ENCODE measurements at regions of chr15 and their contacts with region 1.

Region 1: DNA sequence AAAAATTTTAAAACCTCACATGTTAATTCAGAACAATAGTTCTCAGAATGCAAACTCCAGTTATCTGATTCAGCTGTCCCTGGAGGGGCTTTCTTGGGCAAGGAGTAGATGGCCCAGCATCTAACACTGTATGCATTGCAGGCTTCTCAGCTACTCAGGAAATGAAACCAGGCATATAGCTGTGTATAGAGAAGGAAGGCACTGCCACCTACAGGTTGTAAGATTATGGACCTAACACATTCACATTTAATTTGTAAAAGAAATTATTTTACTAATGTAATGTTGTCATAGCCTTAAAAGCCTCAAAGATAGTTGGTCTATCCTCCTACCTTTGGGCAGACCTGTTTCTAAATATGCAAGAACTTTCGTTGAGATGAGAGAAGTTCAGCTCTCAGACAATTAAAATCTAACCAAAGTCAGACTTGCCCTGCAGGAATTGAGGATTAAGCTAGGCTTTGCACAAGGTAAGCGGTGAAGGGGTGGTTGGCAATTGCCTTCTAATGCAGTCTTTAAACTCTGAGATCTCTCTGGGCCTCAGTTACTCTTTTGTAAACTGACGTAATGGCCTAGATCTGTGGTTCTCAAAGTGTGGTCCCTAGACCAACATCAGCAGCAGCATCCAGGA is 132.8 kb upstream of the SLC24A5 start:
- DNase-seq: peak in 1 of 2 donors; percentile 47
- ATAC-seq: peak; percentile 83 to 96 (median 89)
- H3K4me3 ChIP-seq: no peak overlapping the region
- H3K27ac ChIP-seq: no peak overlapping the region
- H3K4me1 ChIP-seq: no peaks in the 10 kb centered on the region
- H3K27me3 ChIP-seq: no peaks in the 10 kb centered on the region
- CTCF ChIP-seq: peak; percentile 59 to 86 (median 74)

Region 2: DNA sequence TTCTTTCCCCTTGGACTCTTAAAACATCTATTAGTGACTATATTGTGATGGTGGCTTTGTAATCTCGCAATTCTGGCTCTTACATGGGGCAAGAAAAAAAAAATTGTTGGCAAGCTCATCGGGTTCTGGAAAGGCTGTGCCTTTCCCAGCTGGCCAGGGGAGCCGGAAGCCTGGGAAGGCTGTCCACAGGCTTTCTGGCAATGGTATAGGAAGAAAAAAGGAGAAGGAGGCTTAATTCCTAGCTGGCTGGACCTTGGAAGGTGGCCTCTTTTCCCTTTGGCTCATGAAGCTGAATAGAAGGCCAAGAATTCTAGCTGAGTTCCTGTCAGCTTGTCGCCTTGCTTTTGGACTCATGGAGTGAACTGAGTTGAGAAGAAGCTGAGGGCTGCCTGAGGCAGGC is 514.2 kb before region 1 on chr15:
- intact Hi-C with region 1: loop called in 5 of 10 experiments (anchors 2 to 10 kb)
- DNase-seq: peak; percentile 57 to 80
- ATAC-seq: peak; percentile 93 to 98 (median 96)
- H3K4me3 ChIP-seq: peak overlapping the region in 1 of 10 donors; percentile 8
- H3K27ac ChIP-seq: peak overlapping the region in 8 of 10 donors; percentile 2 to 69 (median 46)
- H3K4me1 ChIP-seq: peaks cover 0 to 35% (median 21%) of the 10 kb centered on the region in 9 donors
- H3K27me3 ChIP-seq: no peaks in the 10 kb centered on the region
- CTCF ChIP-seq: no peak

Region 3: DNA sequence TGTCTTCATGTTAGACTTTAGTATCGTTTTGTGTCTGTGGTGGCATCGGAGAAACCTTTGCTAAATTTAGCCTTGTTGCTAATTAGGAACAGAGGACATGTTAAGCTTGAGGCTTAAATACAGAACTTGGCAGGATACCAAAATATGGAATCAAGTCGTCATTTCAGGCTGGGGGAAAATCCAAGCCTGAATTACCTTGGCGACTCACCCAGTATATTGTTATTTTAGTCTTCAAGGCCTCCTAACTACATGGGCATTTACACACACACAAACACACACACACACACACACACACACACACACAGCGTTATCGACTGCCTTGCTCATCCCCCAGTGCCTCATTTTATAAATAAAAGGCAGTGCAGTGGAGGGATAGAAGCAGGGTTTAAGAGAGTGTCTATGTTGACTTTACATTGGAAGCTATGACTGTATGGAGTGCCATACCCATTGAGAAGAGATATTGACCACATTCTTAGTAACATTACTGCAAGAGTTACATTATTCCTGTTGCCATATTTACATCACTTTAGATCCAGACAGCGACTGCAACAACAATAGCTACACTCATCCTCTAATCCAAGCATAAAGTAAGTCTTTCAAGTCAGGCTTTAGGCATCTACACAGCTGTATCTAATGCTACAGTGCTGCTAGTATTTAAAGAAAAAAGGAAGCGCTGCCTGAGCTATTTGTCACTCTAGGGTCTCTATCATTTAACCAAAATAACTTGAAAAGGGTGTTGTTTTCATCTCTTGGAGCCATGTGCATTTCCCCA is 481.5 kb before region 1 on chr15:
- intact Hi-C with region 1: loop called in 7 of 10 experiments (anchors 1 to 10 kb)
- DNase-seq: peak in 1 of 2 donors; percentile 27
- ATAC-seq: peak; percentile 36 to 92 (median 86)
- H3K4me3 ChIP-seq: no peak overlapping the region
- H3K27ac ChIP-seq: peak overlapping the region in 8 of 10 donors; percentile 26 to 72 (median 57)
- H3K4me1 ChIP-seq: peaks cover 6 to 48% (median 24%) of the 10 kb centered on the region in 9 donors
- H3K27me3 ChIP-seq: peaks cover 0 to 10% (median 0%) of the 10 kb centered on the region in 7 donors
- CTCF ChIP-seq: no peak

Region 4: DNA sequence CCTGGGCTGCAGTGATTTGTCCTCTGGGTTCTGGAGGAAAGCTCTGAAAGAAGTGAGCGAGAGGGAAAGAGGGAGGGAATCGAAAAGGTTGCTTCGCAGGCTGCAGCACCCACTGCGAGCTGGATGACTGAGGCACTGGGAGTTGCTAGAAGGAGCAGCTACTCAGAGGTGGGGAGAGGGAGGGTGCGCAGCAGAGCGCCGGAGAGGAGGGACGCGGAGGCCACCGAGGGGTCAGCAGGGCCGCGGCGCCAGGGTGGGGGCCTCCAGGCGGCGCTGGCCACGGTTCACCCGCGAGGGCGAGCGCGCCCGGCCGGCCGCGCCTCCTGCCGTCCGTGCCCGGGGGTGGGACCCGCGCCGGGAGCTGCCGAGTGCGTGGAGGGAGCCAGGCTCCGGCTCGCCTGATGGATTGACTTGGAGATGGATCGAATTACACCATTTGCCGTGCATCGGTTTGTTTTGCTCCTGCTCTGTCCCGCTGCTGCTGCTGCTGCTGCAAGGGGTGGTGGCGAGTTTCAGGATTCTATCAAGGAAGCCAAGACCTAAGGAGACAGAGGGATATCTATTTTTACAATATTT is 270.9 kb before region 1 on chr15 and contains the start of gene SEMA6D:
- intact Hi-C with region 1: loop called in 8 of 10 experiments (anchors 5 to 10 kb)
- DNase-seq: peak; percentile 72 to 83
- ATAC-seq: peak; percentile 77 to 90 (median 82)
- H3K4me3 ChIP-seq: peak within 1 kb of the TSS; percentile 70 to 98 (median 88)
- H3K27ac ChIP-seq: peak within 1 kb of the TSS; percentile 73 to 94 (median 89)
- H3K4me1 ChIP-seq: peaks cover 0 to 48% (median 20%) of the 10 kb centered on the region in 9 donors
- H3K27me3 ChIP-seq: peaks cover 0 to 63% (median 0%) of the 10 kb centered on the region in 7 donors
- CTCF ChIP-seq: peak; percentile 21 to 77 (median 48)
- total RNA-seq, gene SEMA6D: 4.6 to 20.1 (median 12.9) TPM